IMR-90 (cell line): ENCODE measurements at regions of chr5 and their contacts with region 1.

Region 1: GRCh38 chr5:123157791-123158581 is 68.9 kb downstream of the PRDM6 start:
- DNase-seq: peak; percentile 83
- ATAC-seq: peak; percentile 61
- H3K4me3 ChIP-seq: no peak overlapping the region
- H3K27ac ChIP-seq: no peak overlapping the region
- H3K4me1 ChIP-seq: peaks cover 12% of the 10 kb centered on the region
- H3K27me3 ChIP-seq: peaks cover 29% of the 10 kb centered on the region
- CTCF ChIP-seq: peak; percentile 48
- POLR2A ChIP-seq: no peak
- RAD21 ChIP-seq: peak; percentile 50

Region 2: GRCh38 chr5:122515709-122516431 is 642.1 kb before region 1 on chr5:
- CTCF ChIA-PET with region 1: interaction called, 3 read pairs
- POLR2A ChIA-PET with region 1: no interaction called
- dilution Hi-C with region 1: no loop called
- in situ Hi-C with region 1: loop called (anchors 25 kb)
- intact Hi-C with region 1: loop called (anchors 1 kb)
- DNase-seq: peak; percentile 81
- ATAC-seq: peak; percentile 99
- H3K4me3 ChIP-seq: no peak overlapping the region
- H3K27ac ChIP-seq: no peak overlapping the region
- H3K4me1 ChIP-seq: no peaks in the 10 kb centered on the region
- H3K27me3 ChIP-seq: peaks cover 12% of the 10 kb centered on the region
- CTCF ChIP-seq: peak; percentile 87
- POLR2A ChIP-seq: no peak
- RAD21 ChIP-seq: peak; percentile 94

Region 3: GRCh38 chr5:122845229-122846050 is 312.5 kb before region 1 on chr5 and contains the start of gene SNX24:
- CTCF ChIA-PET with region 1: no interaction called
- POLR2A ChIA-PET with region 1: no interaction called
- dilution Hi-C with region 1: no loop called
- in situ Hi-C with region 1: loop called (anchors 10 kb)
- intact Hi-C with region 1: no loop called
- DNase-seq: peak; percentile 56
- ATAC-seq: peak; percentile 96
- H3K4me3 ChIP-seq: peak within 1 kb of the TSS; percentile 98
- H3K27ac ChIP-seq: peak within 1 kb of the TSS; percentile 87
- H3K4me1 ChIP-seq: peaks cover 5% of the 10 kb centered on the region
- H3K27me3 ChIP-seq: no peaks in the 10 kb centered on the region
- CTCF ChIP-seq: no peak
- POLR2A ChIP-seq: peak; percentile 53; the same call in 1 of the 2 replicates
- RAD21 ChIP-seq: no peak
- total RNA-seq, gene SNX24: 13.8 and 21.7 TPM in 2 replicates

Region 4: DNA sequence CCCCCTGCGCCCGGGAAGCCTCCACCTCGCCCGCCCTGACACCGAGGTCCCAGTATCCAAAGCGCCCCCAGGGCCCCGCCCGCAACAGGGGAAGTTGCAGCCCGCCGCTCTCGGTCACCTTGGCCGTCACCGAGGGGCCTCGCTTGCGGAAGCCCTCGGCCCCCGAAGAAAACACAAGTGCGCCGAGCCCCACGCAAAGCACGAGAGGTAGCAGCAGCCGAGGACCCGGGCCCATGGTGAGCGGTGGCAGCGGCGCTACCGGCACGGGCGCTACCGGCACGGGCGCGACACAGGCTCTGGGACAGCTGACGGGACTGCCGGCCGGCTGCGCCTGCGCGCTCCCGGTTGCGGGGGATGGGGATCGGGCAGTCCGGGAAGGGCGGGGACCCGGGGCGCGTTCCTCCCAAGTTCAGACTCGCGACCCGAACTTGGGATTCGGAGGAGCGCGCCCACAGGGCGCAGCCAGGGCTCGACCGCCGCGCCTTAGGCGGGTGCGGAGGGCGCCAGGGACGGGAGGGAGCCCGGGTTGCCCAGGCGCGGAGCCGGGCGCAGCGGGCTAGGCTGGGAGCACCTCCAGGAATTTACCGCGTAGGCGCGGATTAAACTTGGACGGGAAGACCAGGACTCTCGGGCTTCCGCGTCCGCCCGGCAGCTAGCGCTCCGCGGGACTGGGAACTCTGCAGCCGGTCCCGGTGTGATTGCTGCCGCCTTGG is 121.4 kb before region 1 on chr5 and contains the start of gene PPIC:
- CTCF ChIA-PET with region 1: no interaction called
- POLR2A ChIA-PET with region 1: no interaction called
- dilution Hi-C with region 1: no loop called
- in situ Hi-C with region 1: no loop called
- intact Hi-C with region 1: loop called (anchors 1 kb)
- DNase-seq: peak; percentile 71
- ATAC-seq: peak; percentile 93
- H3K4me3 ChIP-seq: peak within 1 kb of the TSS; percentile 79
- H3K27ac ChIP-seq: peak within 1 kb of the TSS; percentile 74
- H3K4me1 ChIP-seq: no peaks in the 10 kb centered on the region; the same call in 1 of the 2 replicates
- H3K27me3 ChIP-seq: no peaks in the 10 kb centered on the region
- CTCF ChIP-seq: no peak
- POLR2A ChIP-seq: no peak; the same call in 1 of the 2 replicates
- RAD21 ChIP-seq: no peak
- total RNA-seq, gene PPIC: 20.6 and 36.9 TPM in 2 replicates

Region 5: GRCh38 chr5:123261752-123262151 is 103.8 kb after region 1 on chr5:
- CTCF ChIA-PET with region 1: no interaction called
- POLR2A ChIA-PET with region 1: no interaction called
- dilution Hi-C with region 1: no loop called
- in situ Hi-C with region 1: no loop called
- intact Hi-C with region 1: no loop called
- DNase-seq: peak; percentile 52
- ATAC-seq: no peak
- H3K4me3 ChIP-seq: no peak overlapping the region
- H3K27ac ChIP-seq: no peak overlapping the region
- H3K4me1 ChIP-seq: no peaks in the 10 kb centered on the region
- H3K27me3 ChIP-seq: no peaks in the 10 kb centered on the region; the same call in 1 of the 2 replicates
- CTCF ChIP-seq: no peak
- POLR2A ChIP-seq: no peak
- RAD21 ChIP-seq: no peak

Region 6: GRCh38 chr5:123344816-123345426 is 186.9 kb after region 1 on chr5:
- CTCF ChIA-PET with region 1: no interaction called
- POLR2A ChIA-PET with region 1: no interaction called
- dilution Hi-C with region 1: no loop called
- in situ Hi-C with region 1: no loop called
- intact Hi-C with region 1: loop called (anchors 1 kb)
- DNase-seq: peak; percentile 52
- ATAC-seq: peak; percentile 79
- H3K4me3 ChIP-seq: no peak overlapping the region
- H3K27ac ChIP-seq: no peak overlapping the region
- H3K4me1 ChIP-seq: no peaks in the 10 kb centered on the region
- H3K27me3 ChIP-seq: no peaks in the 10 kb centered on the region
- CTCF ChIP-seq: peak; percentile 83
- POLR2A ChIP-seq: no peak
- RAD21 ChIP-seq: peak; percentile 71